Thyroid gland (tissue), 4 donors: ENCODE measurements at regions of chr18 and their contacts with region 1.

Region 1: DNA sequence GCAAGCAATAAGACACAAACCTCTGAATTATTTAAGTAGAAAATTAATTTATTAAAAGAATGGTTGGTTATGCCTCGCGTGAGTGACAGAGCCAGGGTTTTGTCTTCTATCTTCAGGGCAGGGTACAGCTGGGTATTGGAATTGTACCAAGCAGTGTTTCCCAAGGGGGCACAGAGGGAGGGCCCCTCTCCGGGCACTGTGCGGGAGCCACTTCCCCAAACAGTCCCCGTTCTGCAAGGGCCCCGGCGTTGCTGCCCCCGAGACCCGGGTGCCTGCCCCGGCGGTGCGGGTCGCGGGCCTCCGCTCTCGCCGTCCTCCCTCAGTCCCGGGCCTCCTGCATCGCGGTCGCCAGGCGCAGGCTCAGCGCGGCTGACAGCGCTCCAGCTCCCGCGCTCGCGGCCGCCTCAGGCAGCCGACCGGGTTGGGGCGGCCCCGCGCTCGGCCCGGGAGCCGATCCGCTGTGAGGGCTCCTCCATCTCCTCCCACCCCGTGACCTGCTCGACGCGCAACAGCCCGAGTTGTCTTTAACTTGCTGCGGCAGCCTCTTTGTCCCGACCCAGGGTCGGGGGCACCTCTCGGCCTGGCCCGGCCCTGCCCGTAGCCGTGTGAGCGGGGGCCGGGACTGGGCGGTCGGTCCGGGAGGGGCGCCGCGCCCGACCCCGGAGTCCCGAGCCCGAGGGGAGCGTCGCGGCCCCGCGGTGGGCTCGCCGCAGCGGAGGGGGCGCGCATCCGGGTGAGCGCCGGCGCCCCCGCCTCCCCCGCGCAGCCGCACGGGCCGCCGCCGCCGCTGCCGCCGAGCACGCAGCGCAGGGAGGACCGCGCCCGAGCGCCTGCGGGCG is 620 bp upstream of the GALNT1 start:
- DNase-seq: peak; percentile 60 to 65
- H3K4me3 ChIP-seq: peak overlapping the region; percentile 44 to 82 (median 82)
- H3K27ac ChIP-seq: peak overlapping the region; percentile 87 to 92 (median 88)
- H3K4me1 ChIP-seq: peaks cover 10 to 18% of the 10 kb centered on the region in 2 donors
- H3K27me3 ChIP-seq: no peaks in the 10 kb centered on the region
- CTCF ChIP-seq: no peak
- POLR2A ChIP-seq: peak in 1 of 2 donors; percentile 51

Region 2: GRCh38 chr18:35513181-35513936 is 67.6 kb before region 1 on chr18:
- intact Hi-C with region 1: loop called (anchors 10 kb)
- DNase-seq: peak; percentile 44 to 50
- H3K4me3 ChIP-seq: no peak overlapping the region
- H3K27ac ChIP-seq: peak overlapping the region in 1 of 3 donors; percentile 33
- H3K4me1 ChIP-seq: peaks cover 7 to 10% of the 10 kb centered on the region in 2 donors
- H3K27me3 ChIP-seq: no peaks in the 10 kb centered on the region
- CTCF ChIP-seq: no peak
- POLR2A ChIP-seq: no peak

Region 3: GRCh38 chr18:35703043-35703688 is 122.2 kb after region 1 on chr18:
- intact Hi-C with region 1: loop called (anchors 10 kb)
- DNase-seq: no peak
- H3K4me3 ChIP-seq: no peak overlapping the region
- H3K27ac ChIP-seq: peak overlapping the region; percentile 25 to 54 (median 35)
- H3K4me1 ChIP-seq: peaks cover 0 to 12% of the 10 kb centered on the region in 2 donors
- H3K27me3 ChIP-seq: no peaks in the 10 kb centered on the region
- CTCF ChIP-seq: no peak
- POLR2A ChIP-seq: no peak